ENCODE measurements at regions of chr11 and their contacts with region 1.

Region 1: DNA sequence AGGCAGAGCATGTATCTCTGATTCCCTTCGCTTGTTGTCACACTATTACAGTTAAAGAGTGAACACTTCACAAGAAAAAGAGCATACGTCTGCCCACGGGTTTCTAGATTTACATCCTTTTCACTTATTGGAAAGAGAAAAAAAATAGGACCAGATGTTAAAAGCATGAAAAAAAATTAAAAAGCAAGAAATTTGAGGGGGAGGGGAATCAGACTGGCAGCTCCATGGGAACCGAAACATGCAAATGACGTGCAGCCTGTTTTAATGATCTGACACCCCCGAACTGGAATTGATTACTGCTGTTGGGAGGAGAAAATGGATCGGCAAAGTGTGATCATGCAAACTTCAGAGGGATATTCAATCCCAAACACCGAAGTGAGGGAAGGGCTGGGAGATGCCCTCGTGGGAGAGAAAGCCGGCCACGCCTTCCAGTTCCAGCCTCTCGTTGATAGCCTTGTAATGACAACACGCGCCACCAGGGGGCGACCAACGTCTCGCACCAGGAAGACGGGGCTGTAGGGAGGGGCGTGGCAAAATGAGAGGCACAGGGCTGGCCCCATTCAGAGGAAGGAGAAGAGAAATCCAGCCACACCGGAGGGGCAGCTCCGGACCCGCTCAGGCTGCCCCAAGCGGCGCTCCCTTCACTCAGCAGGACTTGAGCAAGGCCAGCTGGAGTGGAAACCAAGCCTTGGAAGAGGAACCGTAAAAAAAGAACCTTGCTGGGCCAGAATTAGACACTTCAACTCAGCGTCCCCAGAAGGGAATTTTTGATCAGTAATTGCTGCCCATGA is 53.8 kb upstream of the SYT13 start:
- DNase-seq: peak; percentile 94

Region 2: GRCh38 chr11:45102810-45103621 is 236.9 kb before region 1 on chr11:
- in situ Hi-C with region 1: loop called (anchors 25 kb)
- DNase-seq: peak; percentile 74

Region 3: GRCh38 chr11:45556851-45557707 is 217.2 kb after region 1 on chr11:
- in situ Hi-C with region 1: no loop called
- DNase-seq: peak; percentile 7